ENCODE measurements at regions of chr11 and their contacts with region 1.

Region 1: GRCh38 chr11:44223238-44223637 is 86.7 kb downstream of the ALX4 start:
- DNase-seq: peak in 1 of 5 donors; percentile 19
- ATAC-seq: peak in 1 of 4 donors; percentile 21
- H3K4me3 ChIP-seq: no peak overlapping the region
- H3K27ac ChIP-seq: no peak overlapping the region
- H3K4me1 ChIP-seq: peaks cover 0 to 31% (median 0%) of the 10 kb centered on the region in 12 donors
- H3K27me3 ChIP-seq: no peaks in the 10 kb centered on the region
- CTCF ChIP-seq: no peak
- POLR2A ChIP-seq: no peak

Region 2: GRCh38 chr11:43880640-43881159 is 342.5 kb before region 1 on chr11 and contains the start of gene ALKBH3:
- intact Hi-C with region 1: no loop called
- DNase-seq: peak; percentile 92 to 95 (median 94)
- ATAC-seq: peak; percentile 97 to 100 (median 100)
- H3K4me3 ChIP-seq: peak within 1 kb of the TSS; percentile 53 to 98 (median 90)
- H3K27ac ChIP-seq: peak within 1 kb of the TSS in 11 of 12 donors; percentile 29 to 84 (median 73)
- H3K4me1 ChIP-seq: peaks cover 4 to 20% (median 15%) of the 10 kb centered on the region in 12 donors
- H3K27me3 ChIP-seq: peaks cover 0 to 25% (median 5%) of the 10 kb centered on the region in 9 donors
- CTCF ChIP-seq: peak in 3 of 12 donors; percentile 12 to 25 (median 14)
- POLR2A ChIP-seq: peak in 1 of 2 donors; percentile 59
- total RNA-seq, gene ALKBH3: 13.1 to 24.7 (median 19.5) TPM

Region 3: DNA sequence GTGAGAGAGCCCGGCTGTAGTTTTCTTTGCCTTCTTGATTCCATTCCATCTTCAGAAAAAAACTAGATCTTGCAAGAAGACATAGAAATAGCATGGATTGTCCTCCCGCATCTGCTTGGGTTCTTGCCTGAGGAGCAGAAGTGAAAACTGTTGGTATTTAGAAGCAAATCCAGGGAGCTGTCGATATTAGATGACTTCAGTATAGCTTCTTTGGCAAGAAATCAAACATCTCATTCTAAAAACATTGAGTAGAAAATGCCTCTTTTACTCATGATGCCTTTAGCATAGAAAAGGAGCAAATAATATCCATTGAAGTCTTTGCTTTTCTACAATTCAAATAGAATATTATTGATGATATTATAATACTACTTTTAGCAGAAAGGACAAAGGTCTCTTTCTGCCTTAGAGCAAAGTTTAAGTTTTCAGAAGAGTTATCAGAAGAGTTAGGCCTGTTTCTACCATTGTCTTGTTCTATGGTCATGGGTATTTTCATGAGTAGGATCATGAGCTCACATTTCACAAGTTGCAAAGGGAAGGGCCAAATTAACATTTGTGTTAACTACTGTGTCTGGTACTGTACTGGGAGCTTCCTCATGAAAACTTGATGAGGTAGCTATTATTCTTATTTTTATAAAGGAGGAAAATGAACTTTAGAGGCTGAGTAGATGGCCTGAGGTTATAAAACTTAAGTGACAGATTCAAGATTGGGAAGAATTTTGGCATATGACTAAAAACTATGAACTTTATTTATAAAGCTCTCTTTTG is 78.0 kb before region 1 on chr11:
- intact Hi-C with region 1: loop called in 1 of 10 experiments (anchors 5 kb)
- DNase-seq: no peak
- ATAC-seq: no peak
- H3K4me3 ChIP-seq: no peak overlapping the region
- H3K27ac ChIP-seq: no peak overlapping the region
- H3K4me1 ChIP-seq: peaks cover 8 to 76% (median 36%) of the 10 kb centered on the region in 12 donors
- H3K27me3 ChIP-seq: no peaks in the 10 kb centered on the region
- CTCF ChIP-seq: no peak
- POLR2A ChIP-seq: no peak

Region 4: DNA sequence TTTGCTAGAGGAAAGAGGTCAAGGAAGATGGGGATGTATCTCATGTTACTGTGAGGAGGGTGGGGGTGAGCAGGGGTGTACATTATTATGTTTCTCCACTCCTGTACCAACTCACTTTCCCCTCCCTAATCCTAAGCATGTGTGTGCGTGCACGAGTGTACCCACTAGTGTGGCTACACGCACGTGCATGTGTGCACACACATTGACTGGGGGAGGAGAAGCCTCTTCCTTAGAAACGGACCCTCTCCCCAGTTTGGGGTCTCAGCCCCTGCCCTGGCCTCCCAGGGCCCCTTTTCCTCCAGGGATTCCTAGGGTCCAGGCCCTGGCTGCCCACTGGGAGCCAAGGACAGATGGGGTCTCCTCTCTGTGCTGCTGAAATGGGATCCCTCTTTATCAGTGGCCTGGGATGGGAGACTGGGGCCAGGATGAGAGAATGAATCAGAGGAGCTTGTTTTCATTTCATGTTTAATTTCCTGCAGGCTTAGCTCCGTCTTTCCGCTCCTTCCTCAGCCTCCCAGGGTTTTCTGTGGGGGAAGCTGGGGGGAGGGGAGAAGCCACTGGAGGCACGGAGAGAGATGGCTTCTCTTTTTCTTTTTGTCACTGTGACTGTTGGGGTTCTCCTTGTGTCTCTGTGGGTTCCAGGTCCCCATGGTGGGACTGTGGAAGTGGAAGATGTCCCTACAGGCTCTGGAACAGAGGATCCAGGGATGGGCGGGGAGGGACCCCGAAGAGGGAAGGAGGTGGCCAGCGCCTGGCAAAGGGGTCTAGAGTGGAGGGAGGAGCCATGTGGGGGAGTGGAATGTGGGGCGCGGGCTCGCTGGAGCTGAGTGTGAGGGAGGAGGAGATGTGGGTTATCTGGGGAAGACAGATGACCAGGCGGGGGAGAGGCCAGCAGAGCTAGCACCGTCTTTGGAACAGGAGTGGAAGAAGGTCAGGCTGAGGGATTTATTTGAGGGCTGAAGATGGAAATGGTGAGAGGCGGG is 46.4 kb after region 1 on chr11:
- intact Hi-C with region 1: loop called in 1 of 10 experiments (anchors 10 kb)
- DNase-seq: no peak
- ATAC-seq: peak in 3 of 4 donors; percentile 18 to 70 (median 34)
- H3K4me3 ChIP-seq: peak overlapping the region in 2 of 12 donors; percentile 30 to 31
- H3K27ac ChIP-seq: peak overlapping the region in 4 of 12 donors; percentile 29 to 54 (median 40)
- H3K4me1 ChIP-seq: peaks cover 0 to 7% (median 0%) of the 10 kb centered on the region in 12 donors
- H3K27me3 ChIP-seq: no peaks in the 10 kb centered on the region
- CTCF ChIP-seq: no peak
- POLR2A ChIP-seq: no peak

Measured in heart left ventricle (tissue), 16 donors.